A673 (cell line): ENCODE measurements at regions of chr13 and their contacts with region 1.

Region 1: DNA sequence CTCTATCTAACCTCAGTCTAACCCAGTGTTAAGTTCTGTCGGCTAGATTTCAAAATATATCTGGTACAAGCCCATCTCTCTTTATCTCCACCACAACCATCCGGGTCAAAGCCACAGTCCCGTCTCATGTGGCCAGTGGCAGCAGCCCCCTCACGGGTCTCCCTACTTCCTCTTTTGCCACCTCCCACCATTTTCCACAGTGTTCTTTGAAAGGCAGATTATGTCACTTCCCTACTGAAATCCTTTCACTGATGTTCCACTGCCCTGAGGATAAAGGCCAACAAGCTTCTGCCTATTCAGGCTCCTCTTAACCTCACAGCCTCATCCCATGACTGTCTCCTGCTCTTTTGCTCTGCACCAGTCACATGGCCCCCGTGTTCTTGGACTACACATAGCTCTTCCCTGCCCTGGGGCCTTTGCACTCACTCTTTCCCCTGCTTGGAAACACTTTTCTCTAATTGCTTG is 117.2 kb downstream of the UBL3 start:
- DNase-seq: no peak
- H3K4me3 ChIP-seq: no peak overlapping the region
- H3K27ac ChIP-seq: no peak overlapping the region
- H3K4me1 ChIP-seq: no peaks in the 10 kb centered on the region
- H3K27me3 ChIP-seq: peaks cover 18% of the 10 kb centered on the region
- CTCF ChIP-seq: no peak

Region 2: GRCh38 chr13:29752175-29752574 is 19.0 kb after region 1 on chr13:
- CTCF ChIA-PET with region 1: no interaction called
- POLR2A ChIA-PET with region 1: interaction called, 10 read pairs
- intact Hi-C with region 1: no loop called
- DNase-seq: no peak
- H3K4me3 ChIP-seq: no peak overlapping the region
- H3K27ac ChIP-seq: no peak overlapping the region
- H3K4me1 ChIP-seq: peaks cover 8% of the 10 kb centered on the region
- H3K27me3 ChIP-seq: no peaks in the 10 kb centered on the region
- CTCF ChIP-seq: no peak